ENCODE measurements at regions of chr5 and their contacts with region 1.

Region 1: DNA sequence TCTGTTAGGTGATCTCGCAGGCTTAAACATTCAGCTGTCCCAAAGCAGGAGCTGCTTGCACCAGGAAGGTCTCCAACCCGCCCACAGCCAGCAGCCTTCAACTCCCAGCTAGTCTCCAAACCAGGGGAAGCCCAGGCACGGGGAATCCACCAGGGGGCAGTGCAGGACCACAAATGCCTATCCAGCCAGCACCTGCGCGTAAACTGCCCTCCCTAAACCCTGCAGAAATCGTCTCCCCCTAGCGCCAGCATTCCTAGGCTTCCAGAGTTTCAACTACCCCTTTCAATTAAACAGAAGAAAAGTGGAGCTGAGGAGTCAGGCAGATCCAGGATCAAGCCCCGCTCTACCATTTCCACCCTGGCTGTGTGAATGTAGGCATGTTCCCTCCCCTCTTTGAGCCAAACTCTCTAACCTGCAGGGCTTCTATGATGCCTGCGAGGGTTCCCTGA is 72.0 kb downstream of the HRH2 start:
- DNase-seq: peak; percentile 91
- ATAC-seq: peak; percentile 98
- H3K4me3 ChIP-seq: no peak overlapping the region
- H3K27ac ChIP-seq: no peak overlapping the region
- H3K4me1 ChIP-seq: peaks cover 3% of the 10 kb centered on the region; the same call in 1 of the 2 replicates
- H3K27me3 ChIP-seq: no peaks in the 10 kb centered on the region
- CTCF ChIP-seq: peak; percentile 95

Region 2: DNA sequence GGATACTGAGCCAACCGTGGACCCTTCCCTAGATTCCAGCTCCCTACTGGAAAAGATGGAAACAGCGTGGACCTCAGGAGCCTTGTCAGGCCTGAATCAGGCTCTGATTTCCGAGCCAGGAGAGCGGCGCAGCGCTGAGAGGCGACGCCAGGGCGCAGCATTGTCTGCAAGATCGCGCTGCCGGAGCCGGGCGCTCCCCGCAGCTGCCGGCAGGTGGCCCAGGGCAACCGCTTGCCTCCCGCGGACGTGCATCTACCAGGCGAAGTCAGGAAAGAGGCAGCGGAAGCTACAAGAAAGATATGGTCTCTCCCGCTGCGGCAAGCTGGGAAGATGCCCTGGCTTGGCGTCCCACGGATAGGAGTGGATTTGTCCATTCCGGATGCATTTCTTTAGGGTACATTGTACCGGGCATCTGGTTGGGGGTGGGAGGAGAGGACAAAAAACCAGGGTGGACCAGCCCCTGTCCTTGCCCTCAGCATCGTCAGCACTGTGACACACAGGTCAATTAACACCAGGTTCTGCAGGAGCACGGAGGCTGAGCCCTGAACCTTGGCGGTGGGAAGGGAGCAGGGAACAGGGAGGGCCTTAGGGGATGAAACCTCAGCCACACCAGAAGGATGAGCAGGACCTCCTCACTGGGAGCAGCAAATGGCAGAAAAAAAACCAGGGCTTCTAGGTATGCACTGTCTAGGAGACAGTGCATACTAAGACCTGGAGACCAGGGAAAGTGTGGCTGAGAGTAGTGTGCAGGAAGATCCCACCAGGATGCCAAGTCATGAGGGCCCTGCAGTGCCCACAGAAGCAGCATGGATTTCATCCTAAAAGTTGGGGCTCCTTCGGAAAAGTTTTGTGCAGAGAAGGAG is 195.6 kb before region 1 on chr5:
- CTCF ChIA-PET with region 1: interaction called, 10 read pairs
- POLR2A ChIA-PET with region 1: no interaction called
- intact Hi-C with region 1: no loop called
- DNase-seq: peak; percentile 78
- ATAC-seq: peak; percentile 97
- H3K4me3 ChIP-seq: no peak overlapping the region
- H3K27ac ChIP-seq: no peak overlapping the region
- H3K4me1 ChIP-seq: no peaks in the 10 kb centered on the region
- H3K27me3 ChIP-seq: no peaks in the 10 kb centered on the region
- CTCF ChIP-seq: peak; percentile 96

Region 3: GRCh38 chr5:175809531-175810121 is 79.8 kb after region 1 on chr5:
- CTCF ChIA-PET with region 1: interaction called, 4 read pairs
- POLR2A ChIA-PET with region 1: no interaction called
- intact Hi-C with region 1: loop called (anchors 5 kb)
- DNase-seq: peak; percentile 97
- ATAC-seq: peak; percentile 82
- H3K4me3 ChIP-seq: no peak overlapping the region
- H3K27ac ChIP-seq: peak overlapping the region; percentile 59
- H3K4me1 ChIP-seq: peaks cover 51% of the 10 kb centered on the region
- H3K27me3 ChIP-seq: no peaks in the 10 kb centered on the region
- CTCF ChIP-seq: no peak

Region 4: GRCh38 chr5:175821790-175822211 is 91.9 kb after region 1 on chr5:
- CTCF ChIA-PET with region 1: no interaction called
- POLR2A ChIA-PET with region 1: no interaction called
- intact Hi-C with region 1: loop called (anchors 1 kb)
- DNase-seq: peak; percentile 90
- ATAC-seq: peak; percentile 87
- H3K4me3 ChIP-seq: peak overlapping the region; percentile 52; the same call in 1 of the 2 replicates
- H3K27ac ChIP-seq: peak overlapping the region; percentile 88
- H3K4me1 ChIP-seq: peaks cover 26% of the 10 kb centered on the region
- H3K27me3 ChIP-seq: no peaks in the 10 kb centered on the region
- CTCF ChIP-seq: no peak

Region 5: DNA sequence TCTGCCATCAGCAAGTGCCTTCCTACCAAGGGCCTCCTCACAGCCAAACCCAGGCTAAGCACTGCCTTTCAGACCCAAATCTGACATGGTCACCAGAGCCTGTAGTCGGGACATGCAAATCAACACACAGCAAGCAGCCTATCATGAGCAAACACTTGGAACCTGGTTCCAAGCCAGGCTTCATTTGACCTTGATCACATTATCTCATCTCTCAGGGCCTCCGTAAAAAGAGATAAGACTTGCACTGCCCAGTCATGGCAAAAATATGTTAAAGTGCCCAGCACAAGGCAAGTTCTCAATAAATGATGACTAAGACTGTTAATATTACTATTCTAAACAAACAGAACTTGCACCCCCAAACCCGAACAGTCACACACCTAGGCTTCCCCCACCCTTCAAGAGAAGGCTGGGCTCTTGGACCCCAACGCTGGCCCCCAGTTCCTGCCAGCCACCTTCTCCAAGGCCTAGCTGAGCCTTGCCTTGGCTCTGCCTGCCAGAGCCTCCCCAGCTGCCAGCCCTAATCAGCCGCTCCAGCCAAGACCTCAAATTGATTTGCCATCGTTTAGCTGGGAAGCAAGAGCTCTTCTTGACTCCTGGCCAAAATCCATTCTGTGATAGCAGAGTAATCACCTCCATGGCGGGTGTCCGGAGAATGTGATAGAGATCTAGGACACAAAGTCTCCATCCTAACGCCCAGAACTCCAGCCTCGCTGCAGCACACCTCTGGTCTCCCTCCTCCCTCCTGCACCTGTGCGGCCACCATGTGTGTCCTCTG is 160.2 kb after region 1 on chr5:
- CTCF ChIA-PET with region 1: no interaction called
- POLR2A ChIA-PET with region 1: no interaction called
- intact Hi-C with region 1: no loop called
- DNase-seq: peak; percentile 35
- ATAC-seq: peak; percentile 48
- H3K4me3 ChIP-seq: no peak overlapping the region
- H3K27ac ChIP-seq: no peak overlapping the region
- H3K4me1 ChIP-seq: no peaks in the 10 kb centered on the region; the same call in 1 of the 2 replicates
- H3K27me3 ChIP-seq: no peaks in the 10 kb centered on the region
- CTCF ChIP-seq: no peak

Region 6: GRCh38 chr5:175902026-175902425 is 172.2 kb after region 1 on chr5:
- CTCF ChIA-PET with region 1: interaction called, 3 read pairs
- POLR2A ChIA-PET with region 1: no interaction called
- intact Hi-C with region 1: loop called (anchors 1 kb)
- DNase-seq: no peak
- ATAC-seq: no peak
- H3K4me3 ChIP-seq: no peak overlapping the region
- H3K27ac ChIP-seq: no peak overlapping the region
- H3K4me1 ChIP-seq: no peaks in the 10 kb centered on the region
- H3K27me3 ChIP-seq: no peaks in the 10 kb centered on the region
- CTCF ChIP-seq: no peak

Region 7: DNA sequence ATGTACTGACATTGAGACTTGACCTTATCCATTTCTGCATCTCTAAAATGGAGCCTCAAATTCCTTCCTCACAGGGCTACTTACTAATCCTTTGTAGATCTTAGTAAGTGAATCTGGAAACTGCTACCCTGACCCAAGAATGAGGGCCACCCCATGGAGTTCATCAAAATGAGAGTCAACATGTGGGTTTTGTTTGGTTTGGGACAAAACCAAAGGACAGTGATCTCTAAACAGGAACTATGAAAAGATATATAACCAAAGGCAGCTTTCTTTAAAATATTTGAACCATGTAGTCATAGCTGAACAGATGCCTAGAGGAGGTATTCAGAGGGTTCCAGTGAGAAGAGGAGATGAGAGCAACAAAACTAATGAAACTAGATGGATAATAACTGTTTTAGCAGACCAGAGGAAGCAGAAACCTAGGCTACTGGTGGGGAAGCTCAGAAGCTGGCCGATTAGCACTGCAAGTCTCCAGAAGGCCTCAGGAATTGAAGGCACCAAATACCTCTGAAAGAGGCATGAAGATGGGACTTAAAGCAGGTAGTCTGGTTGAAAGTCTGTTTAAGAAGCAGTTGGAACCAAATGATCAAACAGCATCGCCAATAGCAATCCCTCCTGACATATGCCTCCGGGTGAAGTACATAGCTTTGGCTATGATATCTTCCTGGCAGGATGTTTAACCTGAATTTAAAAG is 192.5 kb after region 1 on chr5:
- CTCF ChIA-PET with region 1: interaction called, 10 read pairs
- POLR2A ChIA-PET with region 1: no interaction called
- intact Hi-C with region 1: no loop called
- DNase-seq: peak; percentile 95
- ATAC-seq: peak; percentile 83
- H3K4me3 ChIP-seq: no peak overlapping the region
- H3K27ac ChIP-seq: peak overlapping the region; percentile 27
- H3K4me1 ChIP-seq: peaks cover 38% of the 10 kb centered on the region
- H3K27me3 ChIP-seq: no peaks in the 10 kb centered on the region
- CTCF ChIP-seq: no peak